Activated CD8-positive, alpha-beta memory T cell treated with anti-CD3 and anti-CD28 coated beads, Interleukin-2, amount 10 ng/mL, durations not matched to agents 7 days and 5 days (primary cell): ENCODE measurements at regions of chr14 and their contacts with region 1.

Region 1: DNA sequence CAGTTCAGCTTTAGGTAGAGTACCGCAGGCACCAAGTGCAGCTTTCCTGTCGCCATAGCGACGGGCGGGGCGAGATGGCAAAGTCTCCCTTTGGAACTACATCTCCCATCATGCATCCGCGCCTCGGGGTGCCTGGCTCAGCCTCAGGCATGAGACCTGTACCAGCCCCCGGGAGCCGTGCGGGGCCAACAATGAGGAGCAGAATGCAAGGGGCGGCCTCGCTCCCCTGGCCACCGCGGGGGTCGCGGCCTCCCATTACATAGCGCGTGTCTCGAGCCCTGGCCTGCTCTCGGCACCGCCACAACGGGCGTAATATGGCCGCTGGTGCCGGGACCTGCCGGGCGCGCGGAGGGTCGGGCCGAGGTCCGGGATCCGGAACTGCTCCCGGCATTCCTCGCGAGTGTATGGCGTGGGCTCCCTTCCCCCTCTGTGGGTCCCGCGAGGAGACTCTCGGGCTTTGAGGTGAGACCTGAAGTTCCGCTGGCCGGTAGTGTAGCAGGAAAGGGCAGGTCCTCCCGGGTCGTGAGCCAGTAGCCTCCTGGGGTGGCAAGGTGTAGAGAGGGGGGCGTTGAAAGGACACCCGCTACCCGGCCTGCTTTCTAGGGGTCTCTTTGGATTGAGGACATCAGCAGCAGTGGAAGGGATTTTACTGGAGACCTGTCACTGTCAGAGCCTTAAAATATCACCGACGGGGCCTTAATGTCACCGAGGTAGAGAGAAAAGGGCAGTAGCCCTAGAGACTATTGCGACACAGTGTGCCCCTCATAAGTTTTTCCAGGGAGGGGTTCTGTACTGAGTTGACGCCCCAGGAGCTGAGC is at the start of gene THTPA:
- DNase-seq: peak; percentile 97
- ATAC-seq: peak; percentile 87
- H3K4me3 Mint-ChIP-seq: peak within 1 kb of the TSS; percentile 90
- H3K27ac Mint-ChIP-seq: peak within 1 kb of the TSS; percentile 93
- H3K4me1 Mint-ChIP-seq: peaks cover 39% of the 10 kb centered on the region
- H3K27me3 Mint-ChIP-seq: no peaks in the 10 kb centered on the region
- total RNA-seq, gene THTPA: 13.5 to 15.6 TPM

Region 2: GRCh38 chr14:23306410-23307145 is 249.5 kb before region 1 on chr14 and contains the start of gene BCL2L2:
- CTCF ChIA-PET with region 1: no interaction called
- DNase-seq: peak; percentile 61
- ATAC-seq: no peak
- H3K4me3 Mint-ChIP-seq: peak within 1 kb of the TSS; percentile 59
- H3K27ac Mint-ChIP-seq: peak within 1 kb of the TSS; percentile 46
- H3K4me1 Mint-ChIP-seq: peaks cover 16% of the 10 kb centered on the region
- H3K27me3 Mint-ChIP-seq: peaks cover 18% of the 10 kb centered on the region
- total RNA-seq, gene BCL2L2: 3.1 to 3.7 TPM

Region 3: DNA sequence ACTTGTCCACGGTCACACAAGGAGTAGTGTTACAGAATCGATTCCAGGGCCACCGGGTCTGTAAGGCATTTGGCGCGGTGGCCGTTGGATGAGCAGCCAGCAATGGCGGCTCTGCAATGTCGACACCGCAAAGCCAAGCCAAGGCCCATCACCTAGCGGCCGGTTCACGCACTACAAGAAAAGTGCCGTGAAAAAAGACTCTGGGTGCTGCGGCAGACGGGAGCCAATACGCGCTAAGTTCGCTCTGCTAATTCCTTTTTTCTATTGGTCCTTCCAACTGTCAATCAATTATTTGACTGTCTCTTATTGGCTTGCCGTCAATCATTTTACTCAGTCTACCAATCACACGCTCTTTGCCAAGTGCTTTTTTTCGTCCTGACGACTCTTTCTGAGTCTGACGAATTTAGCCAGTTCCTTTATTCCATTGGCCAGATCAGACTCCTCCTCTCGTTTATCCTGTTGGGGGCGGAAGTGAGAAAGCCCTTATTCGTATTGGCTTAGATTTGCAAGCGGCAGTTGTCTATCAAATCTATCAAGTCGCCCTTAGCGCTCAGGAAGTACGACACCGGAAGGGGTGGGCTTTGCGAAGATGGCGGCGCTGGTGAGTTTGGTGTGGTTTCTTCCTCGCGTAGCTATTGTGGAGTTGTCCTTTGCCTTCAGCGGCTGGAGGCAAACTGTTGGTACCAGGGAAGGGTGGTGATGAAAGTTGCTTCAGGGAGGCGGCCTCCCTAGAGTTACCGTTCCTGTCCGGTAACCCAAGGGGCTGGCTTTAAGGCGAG is 86.8 kb before region 1 on chr14 and contains the start of gene NGDN:
- CTCF ChIA-PET with region 1: interaction called, 212 read pairs
- DNase-seq: peak; percentile 96
- ATAC-seq: peak; percentile 96
- H3K4me3 Mint-ChIP-seq: no peak within 1 kb of the TSS
- H3K27ac Mint-ChIP-seq: no peak within 1 kb of the TSS
- H3K4me1 Mint-ChIP-seq: peaks cover 14% of the 10 kb centered on the region
- H3K27me3 Mint-ChIP-seq: no peaks in the 10 kb centered on the region
- total RNA-seq, gene NGDN: 42.7 to 53.0 TPM

Region 4: DNA sequence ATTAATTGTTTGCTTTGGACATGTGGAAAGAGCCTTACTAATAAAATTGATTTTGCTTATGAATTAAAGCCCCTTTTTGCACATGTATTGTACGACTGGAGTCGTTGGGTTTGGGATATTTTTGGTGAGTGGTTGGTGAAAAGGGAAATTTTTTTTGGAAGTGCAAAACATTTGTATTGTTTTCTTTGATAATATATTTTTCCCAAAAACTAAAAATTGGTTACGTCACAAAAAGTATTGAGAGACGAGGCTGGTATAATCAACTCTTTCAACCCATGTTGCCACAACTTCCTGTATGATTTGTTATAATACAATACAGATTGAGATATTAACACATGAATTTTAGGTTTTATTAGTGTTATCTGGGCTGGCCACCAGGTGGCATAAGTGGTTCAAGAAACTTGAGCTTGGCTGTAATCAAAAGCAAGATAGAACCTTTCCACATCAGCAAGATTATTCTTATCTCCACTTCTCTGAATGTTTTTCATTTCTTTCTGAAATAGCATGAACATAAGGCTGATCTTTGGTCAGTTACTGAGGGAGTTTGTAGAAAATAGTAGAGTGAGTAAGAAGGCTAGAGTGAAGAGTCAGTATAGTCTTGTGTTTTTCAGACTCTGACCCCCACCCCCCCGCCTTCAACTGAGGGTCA is 77.9 kb before region 1 on chr14:
- CTCF ChIA-PET with region 1: interaction called, 212 read pairs
- DNase-seq: peak; percentile 77
- ATAC-seq: peak; percentile 65
- H3K4me3 Mint-ChIP-seq: no peak overlapping the region
- H3K27ac Mint-ChIP-seq: no peak overlapping the region
- H3K4me1 Mint-ChIP-seq: peaks cover 3% of the 10 kb centered on the region
- H3K27me3 Mint-ChIP-seq: no peaks in the 10 kb centered on the region

Region 5: GRCh38 chr14:23539248-23540140 is 16.6 kb before region 1 on chr14:
- CTCF ChIA-PET with region 1: interaction called, 22 read pairs
- DNase-seq: no peak
- ATAC-seq: peak; percentile 77
- H3K4me3 Mint-ChIP-seq: no peak overlapping the region
- H3K27ac Mint-ChIP-seq: no peak overlapping the region
- H3K4me1 Mint-ChIP-seq: peaks cover 2% of the 10 kb centered on the region
- H3K27me3 Mint-ChIP-seq: peaks cover 2% of the 10 kb centered on the region

Region 6: GRCh38 chr14:23567192-23568020 is 11.3 kb after region 1 on chr14 and contains the start of gene AP1G2:
- CTCF ChIA-PET with region 1: interaction called, 11 read pairs
- DNase-seq: peak; percentile 94
- ATAC-seq: peak; percentile 98
- H3K4me3 Mint-ChIP-seq: peak within 1 kb of the TSS; percentile 95
- H3K27ac Mint-ChIP-seq: peak within 1 kb of the TSS; percentile 96
- H3K4me1 Mint-ChIP-seq: peaks cover 39% of the 10 kb centered on the region
- H3K27me3 Mint-ChIP-seq: no peaks in the 10 kb centered on the region
- total RNA-seq, gene AP1G2: 222 to 294 TPM